ENCODE measurements at regions of chr7 and their contacts with region 1.

Region 1: GRCh38 chr7:27235387-27236311 is 7.0 kb upstream of the EVX1 start:
- DNase-seq: peak; percentile 70 to 73
- ATAC-seq: peak; percentile 89 to 92
- H3K4me3 ChIP-seq: peak overlapping the region; percentile 57
- H3K27ac ChIP-seq: peak overlapping the region; percentile 81 to 91
- H3K4me1 ChIP-seq: peaks cover 8% of the 10 kb centered on the region; the same call in 2 of the 3 replicates
- CTCF ChIP-seq: peak; percentile 80
- EP300 ChIP-seq: no peak
- POLR2A ChIP-seq: peak; percentile 19; the same call in 1 of the 2 replicates
- RAD21 ChIP-seq: peak; percentile 90 to 97

Region 2: GRCh38 chr7:27224983-27225934 is 10.4 kb before region 1 on chr7:
- CTCF ChIA-PET with region 1: interaction called, 10 read pairs
- POLR2A ChIA-PET with region 1: no interaction called
- DNase-seq: no peak
- ATAC-seq: no peak
- H3K4me3 ChIP-seq: no peak overlapping the region
- H3K27ac ChIP-seq: no peak overlapping the region
- H3K4me1 ChIP-seq: no peaks in the 10 kb centered on the region
- CTCF ChIP-seq: no peak
- EP300 ChIP-seq: no peak
- POLR2A ChIP-seq: no peak
- RAD21 ChIP-seq: no peak

Region 3: DNA sequence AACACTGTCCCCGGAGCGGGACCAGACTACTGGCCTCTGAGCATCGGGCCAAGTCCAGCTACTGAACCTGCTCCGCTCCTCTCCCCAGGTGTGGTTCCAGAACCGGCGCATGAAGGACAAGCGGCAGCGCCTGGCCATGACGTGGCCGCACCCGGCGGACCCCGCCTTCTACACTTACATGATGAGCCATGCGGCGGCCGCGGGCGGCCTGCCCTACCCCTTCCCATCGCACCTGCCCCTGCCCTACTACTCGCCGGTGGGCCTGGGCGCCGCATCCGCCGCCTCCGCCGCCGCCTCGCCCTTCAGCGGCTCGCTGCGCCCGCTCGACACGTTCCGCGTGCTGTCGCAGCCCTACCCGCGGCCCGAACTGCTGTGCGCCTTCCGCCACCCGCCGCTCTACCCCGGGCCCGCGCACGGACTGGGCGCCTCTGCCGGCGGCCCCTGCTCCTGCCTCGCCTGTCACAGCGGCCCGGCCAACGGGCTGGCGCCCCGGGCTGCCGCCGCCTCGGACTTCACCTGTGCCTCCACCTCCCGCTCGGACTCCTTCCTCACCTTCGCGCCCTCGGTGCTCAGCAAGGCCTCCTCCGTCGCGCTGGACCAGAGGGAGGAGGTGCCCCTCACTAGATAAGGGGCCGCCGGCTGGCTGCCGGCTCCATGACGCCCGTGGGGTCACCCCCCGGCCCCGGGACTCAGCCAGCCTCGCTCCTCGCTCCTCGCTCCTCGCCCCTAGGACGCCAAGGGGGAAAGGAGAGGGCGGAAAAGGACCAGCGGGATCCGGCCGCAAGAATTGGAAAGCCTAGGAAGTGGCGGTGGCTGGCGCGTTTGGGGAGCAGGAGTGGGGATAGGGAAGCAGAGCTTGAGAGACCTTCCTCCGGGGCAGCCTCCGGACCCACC is 10.4 kb after region 1 on chr7:
- CTCF ChIA-PET with region 1: interaction called, 18 read pairs
- POLR2A ChIA-PET with region 1: no interaction called
- DNase-seq: no peak
- ATAC-seq: peak; percentile 23 to 51; a peak in 3 of 6 replicates
- H3K4me3 ChIP-seq: no peak overlapping the region; the same call in 2 of the 3 replicates
- H3K27ac ChIP-seq: peak overlapping the region in 1 of 2 experiments; percentile 42; a peak in 1 of 6 replicates
- H3K4me1 ChIP-seq: no peaks in the 10 kb centered on the region
- CTCF ChIP-seq: no peak
- EP300 ChIP-seq: no peak
- POLR2A ChIP-seq: no peak
- RAD21 ChIP-seq: no peak

Region 4: DNA sequence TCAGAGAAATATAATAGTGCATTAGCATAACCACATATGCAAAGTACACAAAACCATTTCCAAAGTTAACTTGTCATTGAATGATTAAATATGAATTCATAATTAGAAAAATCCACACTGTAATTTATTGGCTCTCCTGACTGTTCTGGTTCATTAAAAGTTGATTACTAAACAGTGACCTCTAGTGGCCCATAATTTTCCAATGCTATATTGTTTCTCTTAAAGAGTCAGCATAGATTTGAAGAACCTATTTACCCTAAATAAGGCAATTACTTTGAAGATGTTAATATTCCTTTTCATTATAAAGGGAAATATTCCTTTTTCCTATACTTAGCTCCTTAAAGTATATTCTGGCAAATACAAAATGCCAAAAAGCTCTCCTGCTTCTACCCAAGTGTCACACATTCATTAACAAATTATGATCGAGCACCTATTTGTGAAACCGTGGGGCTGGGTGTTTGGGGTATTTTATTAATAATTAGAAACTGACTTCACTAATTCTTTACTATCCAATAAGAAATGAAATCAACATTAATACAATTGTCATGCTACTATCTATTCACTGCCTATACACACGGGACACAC is 340.8 kb after region 1 on chr7:
- CTCF ChIA-PET with region 1: interaction called, 24 read pairs
- POLR2A ChIA-PET with region 1: no interaction called
- DNase-seq: peak; percentile 14 to 38
- ATAC-seq: peak; percentile 47 to 78; a peak in 4 of 6 replicates
- H3K4me3 ChIP-seq: no peak overlapping the region
- H3K27ac ChIP-seq: no peak overlapping the region
- H3K4me1 ChIP-seq: peaks cover 7% of the 10 kb centered on the region; the same call in 2 of the 3 replicates
- CTCF ChIP-seq: peak; percentile 85
- EP300 ChIP-seq: no peak
- POLR2A ChIP-seq: no peak
- RAD21 ChIP-seq: peak; percentile 74 to 83

Region 5: GRCh38 chr7:27605689-27606269 is 370.1 kb after region 1 on chr7:
- CTCF ChIA-PET with region 1: interaction called, 21 read pairs
- POLR2A ChIA-PET with region 1: interaction called, 6 read pairs
- DNase-seq: peak; percentile 22 to 55
- ATAC-seq: peak in 1 of 2 experiments; percentile 83; a peak in 4 of 6 replicates
- H3K4me3 ChIP-seq: peak overlapping the region; percentile 44
- H3K27ac ChIP-seq: peak overlapping the region; percentile 53 to 79
- H3K4me1 ChIP-seq: peaks cover 68% of the 10 kb centered on the region
- CTCF ChIP-seq: peak; percentile 84
- EP300 ChIP-seq: no peak
- POLR2A ChIP-seq: no peak
- RAD21 ChIP-seq: peak; percentile 54 to 73

Measured in A549 (cell line).